PC-9 (cell line): ENCODE measurements at regions of chr3 and their contacts with region 1.

Region 1: DNA sequence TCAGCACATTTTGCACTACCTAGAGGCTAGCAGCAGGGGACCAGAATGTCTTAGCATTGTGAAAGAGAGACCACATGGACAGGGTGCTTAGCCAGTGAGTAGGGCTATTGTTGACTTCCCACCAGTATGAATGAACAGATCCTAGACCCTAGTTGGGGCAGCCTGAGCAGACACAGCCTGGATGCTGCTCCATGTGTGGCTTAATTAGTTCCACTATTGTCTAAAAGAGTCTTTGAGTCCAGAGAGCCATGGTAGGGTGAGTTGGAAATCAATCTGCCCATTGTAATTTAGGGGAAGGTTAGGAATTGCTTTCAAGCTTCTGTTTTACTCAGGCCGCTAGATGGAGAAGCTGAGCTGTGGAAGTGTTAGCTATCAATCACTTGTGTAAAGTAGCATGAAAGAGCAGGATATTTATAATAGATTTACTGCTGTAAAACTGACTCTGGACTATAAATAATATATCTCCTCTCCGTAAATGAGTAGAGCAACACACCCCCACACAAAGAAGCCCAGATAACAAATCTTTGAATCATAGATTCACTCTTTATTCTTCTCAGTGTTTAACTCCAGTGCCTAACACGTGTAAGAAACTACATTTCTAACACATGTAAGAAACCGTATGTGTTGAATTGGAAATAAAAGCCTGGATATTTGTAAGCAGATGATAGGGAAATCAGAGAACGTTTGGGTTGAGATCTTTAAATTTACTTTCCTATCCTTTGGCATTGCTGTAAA is 4.1 kb upstream of the GCSAM start:
- DNase-seq: peak; percentile 53 to 61
- H3K4me3 ChIP-seq: no peak overlapping the region
- H3K27ac ChIP-seq: no peak overlapping the region
- H3K4me1 ChIP-seq: peaks cover 10% of the 10 kb centered on the region; the same call in 1 of the 2 replicates
- H3K27me3 ChIP-seq: no peaks in the 10 kb centered on the region
- CTCF ChIP-seq: peak; percentile 93

Region 2: DNA sequence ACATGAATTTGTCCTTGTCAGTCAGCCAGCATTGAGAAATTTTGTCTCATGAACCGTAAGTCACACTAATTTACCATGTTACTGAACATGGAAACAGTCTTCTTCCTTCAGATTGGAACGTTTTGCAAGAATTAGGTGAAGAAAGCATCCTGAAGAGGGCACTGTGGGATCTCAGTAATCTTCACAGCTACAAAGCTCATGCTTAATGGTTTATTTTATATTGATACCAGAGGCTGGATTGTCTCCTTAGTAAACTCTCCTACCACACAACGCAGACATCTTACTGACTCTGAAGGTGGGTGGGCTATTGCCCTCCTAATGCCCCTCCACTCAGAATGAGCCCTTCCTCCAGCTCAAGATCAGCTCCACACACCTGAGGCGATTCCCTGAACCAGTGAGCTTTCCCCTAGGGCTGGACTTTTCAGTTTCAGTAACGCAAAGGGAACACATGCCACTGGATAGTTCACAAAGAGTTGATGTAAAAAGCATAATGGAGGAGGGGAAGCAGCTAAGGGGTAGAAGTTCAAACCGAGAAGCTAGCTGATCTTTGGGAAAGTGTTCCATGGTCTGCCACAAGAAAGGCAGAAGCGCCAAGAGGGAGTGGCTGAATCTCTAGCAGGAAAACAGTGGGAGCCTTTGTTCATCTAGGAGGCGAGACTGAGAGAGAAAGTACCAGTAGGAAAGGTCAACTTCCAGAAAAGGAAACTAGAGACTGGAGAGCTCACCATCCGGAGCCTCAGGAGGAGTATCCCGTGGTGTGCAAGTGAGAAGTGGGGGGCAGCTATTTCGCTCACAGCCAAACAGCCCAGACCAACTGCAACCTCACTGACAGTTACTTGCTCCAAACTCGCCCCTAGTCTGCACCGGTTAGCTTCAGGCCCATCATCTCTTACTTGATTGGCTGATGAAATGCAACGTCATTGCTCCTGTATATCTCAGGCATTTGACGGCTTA is 156.5 kb after region 1 on chr3 and contains the start of gene SLC9C1:
- CTCF ChIA-PET with region 1: no interaction called
- POLR2A ChIA-PET with region 1: no interaction called
- intact Hi-C with region 1: loop called (anchors 1 kb)
- DNase-seq: peak; percentile 36 to 38
- H3K4me3 ChIP-seq: no peak within 1 kb of the TSS
- H3K27ac ChIP-seq: no peak within 1 kb of the TSS
- H3K4me1 ChIP-seq: no peaks in the 10 kb centered on the region
- H3K27me3 ChIP-seq: no peaks in the 10 kb centered on the region
- CTCF ChIP-seq: peak; percentile 60
- total RNA-seq, gene SLC9C1: not detected in 2 replicates

Region 3: GRCh38 chr3:112327371-112327951 is 190.3 kb after region 1 on chr3:
- CTCF ChIA-PET with region 1: no interaction called
- POLR2A ChIA-PET with region 1: no interaction called
- intact Hi-C with region 1: loop called (anchors 5 kb)
- DNase-seq: peak in 1 of 2 experiments; percentile 11
- H3K4me3 ChIP-seq: no peak overlapping the region
- H3K27ac ChIP-seq: no peak overlapping the region
- H3K4me1 ChIP-seq: no peaks in the 10 kb centered on the region
- H3K27me3 ChIP-seq: no peaks in the 10 kb centered on the region
- CTCF ChIP-seq: peak; percentile 66

Region 4: DNA sequence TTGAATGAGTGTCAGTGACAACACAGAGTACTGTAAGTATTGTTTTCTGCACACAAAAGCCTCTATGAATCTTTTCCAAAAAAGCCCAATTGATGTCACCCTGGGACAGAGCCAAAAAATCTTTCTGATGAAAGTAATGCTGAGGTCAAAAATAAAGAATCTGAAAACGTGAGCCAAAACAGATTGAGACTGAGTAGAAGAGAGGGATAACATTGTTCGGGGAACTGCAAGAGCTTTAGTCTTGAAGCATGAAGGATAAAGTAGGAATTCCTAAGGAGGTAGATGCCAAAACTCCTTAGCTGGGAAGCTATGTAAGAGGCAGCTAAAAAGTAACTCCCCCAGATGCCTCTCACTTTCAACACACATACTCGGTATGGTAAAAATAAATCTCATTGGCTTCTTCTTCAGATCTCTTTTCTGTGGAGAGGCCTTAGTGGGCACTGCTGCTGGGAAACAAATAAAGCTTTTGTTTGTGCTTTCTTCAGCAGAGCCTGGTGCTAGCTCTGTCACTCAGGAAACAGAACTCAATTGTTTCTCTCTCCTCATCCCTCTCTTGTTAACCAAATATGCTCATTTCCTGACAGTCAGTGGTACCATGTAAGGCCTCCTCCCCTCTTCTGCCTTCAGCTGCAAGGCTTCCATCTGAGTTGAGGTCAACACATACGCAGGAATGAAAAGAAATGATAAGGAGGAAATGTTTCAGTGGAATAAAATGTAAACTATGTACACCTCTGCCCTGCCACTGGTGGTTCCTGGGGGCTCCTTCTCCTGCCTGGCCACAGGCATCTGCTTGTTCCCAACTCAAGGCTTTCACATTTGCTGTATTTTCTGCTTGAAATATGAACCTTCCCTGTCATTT is 253.9 kb after region 1 on chr3:
- CTCF ChIA-PET with region 1: no interaction called
- POLR2A ChIA-PET with region 1: no interaction called
- intact Hi-C with region 1: no loop called
- DNase-seq: peak; percentile 52 to 72
- H3K4me3 ChIP-seq: no peak overlapping the region
- H3K27ac ChIP-seq: no peak overlapping the region
- H3K4me1 ChIP-seq: peaks cover 11% of the 10 kb centered on the region
- H3K27me3 ChIP-seq: no peaks in the 10 kb centered on the region
- CTCF ChIP-seq: no peak